H1 (cell line): ENCODE measurements at regions of chr12 and their contacts with region 1.

Region 1: DNA sequence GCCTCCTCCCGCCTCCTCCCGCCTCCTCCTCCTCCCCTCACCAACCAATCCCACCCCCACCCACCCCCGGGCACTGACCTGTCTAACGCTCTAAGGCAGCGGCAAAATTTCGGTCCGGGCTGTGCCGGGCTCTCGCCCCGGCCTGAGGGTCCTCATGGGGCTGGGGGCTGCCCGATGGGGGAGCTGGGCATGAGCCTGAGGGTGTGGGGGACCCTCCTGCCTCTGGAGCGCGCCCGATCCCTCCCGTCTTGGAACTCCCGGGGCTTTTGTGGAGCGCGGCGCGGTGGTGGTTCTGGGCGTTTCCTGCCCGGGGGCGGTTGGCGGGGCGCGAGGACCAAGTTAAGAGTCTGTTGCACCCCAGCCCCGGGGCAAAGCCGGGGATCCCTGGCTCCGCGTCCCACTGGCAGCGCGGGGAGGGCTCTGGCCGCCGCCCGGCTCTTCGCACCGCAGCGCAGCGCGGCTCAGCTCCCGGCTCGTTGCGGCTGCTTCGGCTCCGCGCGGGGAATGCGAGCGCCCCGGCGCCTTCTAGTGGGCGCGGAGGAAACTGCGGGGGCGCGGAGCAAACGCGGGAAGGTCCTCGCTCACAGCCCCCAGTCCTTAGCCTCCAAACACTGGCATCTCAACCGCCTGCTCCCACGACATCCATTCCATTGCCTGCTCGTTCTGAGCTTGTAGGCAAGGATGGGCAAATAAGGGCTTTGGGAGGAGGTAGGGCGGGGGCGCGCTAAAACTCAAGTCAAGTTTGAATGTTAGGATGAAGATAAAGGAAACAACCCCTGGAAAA is at the start of gene B4GALNT1:
- DNase-seq: peak in 1 of 2 experiments; percentile 85
- H3K4me3 ChIP-seq: peak within 1 kb of the TSS; percentile 43 to 83 (median 54)
- H3K27ac ChIP-seq: no peak within 1 kb of the TSS
- H3K4me1 ChIP-seq: peaks cover 0 to 13% (median 9%) of the 10 kb centered on the region in 4 experiments; a peak in 6 of 7 replicates
- H3K27me3 ChIP-seq: peaks cover 49 to 68% (median 63%) of the 10 kb centered on the region in 4 experiments
- CTCF ChIP-seq: peak in 2 of 3 experiments; percentile 84 to 90; a peak in 3 of 4 replicates
- EP300 ChIP-seq: no peak
- POLR2A ChIP-seq: no peak
- RAD21 ChIP-seq: peak; percentile 44 to 58; a peak in 3 of 4 replicates
- total RNA-seq, gene B4GALNT1: 1.4 and 1.5 TPM in 2 replicates

Region 2: DNA sequence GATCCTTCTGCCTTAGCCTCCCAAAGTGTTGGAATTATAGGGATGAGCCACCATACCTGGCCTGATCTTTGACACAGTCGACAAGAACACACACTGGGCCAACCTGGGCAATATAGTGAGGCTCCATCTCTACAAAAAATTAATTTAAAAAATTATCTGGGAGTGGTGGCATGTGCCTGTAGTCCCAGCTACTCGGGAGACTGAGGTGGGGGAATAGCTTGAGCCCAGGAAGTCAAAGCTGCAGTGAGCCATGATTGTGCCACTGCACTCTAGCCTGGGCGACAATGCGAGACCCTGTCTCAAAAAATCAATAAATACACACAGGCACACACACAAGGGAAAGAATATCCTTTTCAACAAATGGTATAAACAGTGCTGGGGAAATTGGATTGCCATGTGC is 55.0 kb after region 1 on chr12:
- CTCF ChIA-PET with region 1: interaction called, 15 read pairs
- POLR2A ChIA-PET with region 1: no interaction called
- DNase-seq: no peak
- H3K4me3 ChIP-seq: no peak overlapping the region
- H3K27ac ChIP-seq: no peak overlapping the region
- H3K4me1 ChIP-seq: no peaks in the 10 kb centered on the region
- H3K27me3 ChIP-seq: no peaks in the 10 kb centered on the region
- CTCF ChIP-seq: no peak
- EP300 ChIP-seq: no peak
- POLR2A ChIP-seq: no peak
- RAD21 ChIP-seq: no peak